Activated T-helper 1 cell treated with anti-CD3 and anti-CD28 coated beads, Interleukin-12 subunit alpha, Interleukin-12 subunit beta, Interleukin-2, Interleukin-4 antibody, amounts not matched to agents 30 ng/mL and 10 ng/mL and 1 ng/mL, durations not matched to agents 14 hours and 24 hours and 36 hours (primary cell): ENCODE measurements at regions of chr20 and their contacts with region 1.

Region 1: DNA sequence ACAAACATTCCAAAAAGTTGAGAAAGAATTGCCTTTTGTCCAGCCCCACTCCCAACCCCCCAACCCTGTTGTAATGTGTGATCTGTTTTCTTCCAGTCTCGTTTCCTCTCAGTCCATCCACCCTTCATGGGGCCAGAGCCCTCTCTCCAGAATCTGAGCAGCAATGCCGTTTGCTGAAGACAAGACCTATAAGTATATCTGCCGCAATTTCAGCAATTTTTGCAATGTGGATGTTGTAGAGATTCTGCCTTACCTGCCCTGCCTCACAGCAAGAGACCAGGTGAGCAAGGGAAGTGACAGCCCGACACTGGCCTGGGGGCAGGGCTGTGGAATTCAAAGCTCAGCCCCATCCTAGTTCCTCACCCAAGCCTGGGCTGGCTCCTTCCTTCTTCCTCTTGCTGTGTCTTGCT is 7.8 kb downstream of the MAVS start:
- DNase-seq: no peak
- H3K4me3 Mint-ChIP-seq: no peak overlapping the region
- H3K27ac Mint-ChIP-seq: peak overlapping the region; percentile 18
- H3K4me1 Mint-ChIP-seq: peaks cover 12% of the 10 kb centered on the region
- H3K27me3 Mint-ChIP-seq: no peaks in the 10 kb centered on the region

Region 2: DNA sequence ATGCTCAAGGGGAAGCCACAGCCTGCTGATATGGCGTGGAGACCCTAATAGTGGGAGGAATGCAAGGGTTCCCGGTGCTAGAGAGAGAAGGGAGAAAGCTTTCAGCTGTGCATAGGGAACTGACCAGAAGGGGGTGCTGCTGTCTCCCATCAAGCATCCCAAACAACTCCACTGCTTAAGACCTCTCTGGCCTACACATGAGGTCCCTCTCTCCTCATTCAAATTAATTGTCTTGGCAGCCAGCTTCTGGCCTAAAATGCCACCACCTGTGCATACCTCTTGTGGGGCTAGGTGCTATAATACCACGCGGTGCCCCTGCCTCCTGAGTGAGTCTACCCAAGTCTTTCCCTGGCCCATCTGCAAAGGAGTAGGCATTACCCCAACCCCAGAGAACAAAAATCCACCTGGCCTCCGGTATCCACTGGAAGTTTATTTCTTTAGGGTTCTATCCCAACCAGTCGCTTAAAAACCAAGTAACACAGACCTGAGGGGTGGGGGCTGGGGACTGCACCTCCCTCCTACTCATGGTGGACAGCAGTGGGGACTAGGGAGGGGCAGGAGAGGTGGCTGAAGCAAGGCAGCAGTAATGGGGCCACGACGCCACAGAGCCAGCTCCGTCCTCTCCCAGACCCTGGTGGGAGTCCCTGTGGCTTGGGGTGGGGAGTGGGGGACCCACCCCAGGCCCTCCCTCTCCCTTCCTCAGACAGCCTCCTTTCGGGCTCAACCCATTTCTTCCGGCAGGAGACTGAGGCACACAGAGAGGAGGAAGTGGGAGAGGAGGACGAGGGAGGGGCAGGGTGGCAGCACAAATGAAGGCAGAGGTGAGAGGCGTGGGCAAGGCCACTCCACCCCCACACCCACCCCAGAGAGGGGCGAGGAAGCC is 101.1 kb before region 1 on chr20:
- intact Hi-C with region 1: loop called (anchors 1 kb)
- DNase-seq: peak; percentile 51
- H3K4me3 Mint-ChIP-seq: no peak overlapping the region
- H3K27ac Mint-ChIP-seq: no peak overlapping the region
- H3K4me1 Mint-ChIP-seq: peaks cover 7% of the 10 kb centered on the region
- H3K27me3 Mint-ChIP-seq: no peaks in the 10 kb centered on the region

Region 3: DNA sequence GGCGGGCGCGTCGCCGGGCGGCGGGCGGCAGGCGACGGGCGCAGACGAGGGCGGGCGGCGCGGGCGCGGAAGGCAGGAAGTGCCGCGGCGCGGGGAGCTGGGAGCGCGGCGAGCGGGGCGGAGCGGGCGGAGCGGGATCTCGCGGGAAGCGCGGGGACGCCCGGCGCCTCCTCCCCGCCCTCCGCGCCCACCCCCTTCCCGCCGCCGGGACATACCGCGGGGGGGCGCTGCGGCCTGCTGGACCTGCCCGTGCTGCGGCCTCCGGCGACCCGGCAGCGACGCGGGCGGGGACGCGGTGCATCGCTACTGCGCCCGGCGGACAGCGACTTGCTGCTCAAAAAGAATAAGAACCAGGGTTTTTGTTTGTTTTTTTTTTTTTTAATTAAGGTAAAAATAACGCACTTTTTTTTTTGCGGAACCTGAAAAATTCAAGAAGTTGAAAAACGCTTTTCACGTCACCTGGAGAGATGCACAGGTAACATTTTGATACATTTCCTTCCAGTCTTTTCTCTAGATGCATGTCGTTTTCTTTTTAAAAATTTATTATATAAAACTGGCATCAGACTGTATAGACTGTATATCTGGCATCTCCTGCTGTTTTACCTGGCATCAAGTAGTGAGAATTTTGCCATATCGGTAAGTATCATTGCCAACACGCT is 67.7 kb before region 1 on chr20 and contains the start of gene CENPB:
- intact Hi-C with region 1: loop called (anchors 1 kb)
- DNase-seq: peak; percentile 88
- H3K4me3 Mint-ChIP-seq: peak within 1 kb of the TSS; percentile 86
- H3K27ac Mint-ChIP-seq: peak within 1 kb of the TSS; percentile 70
- H3K4me1 Mint-ChIP-seq: peaks cover 39% of the 10 kb centered on the region
- H3K27me3 Mint-ChIP-seq: no peaks in the 10 kb centered on the region
- total RNA-seq, gene CENPB: 72.3 and 80.2 TPM in 2 replicates